Ovary (tissue), 10 donors: ENCODE measurements at regions of chr1 and their contacts with region 1.

Region 1: DNA sequence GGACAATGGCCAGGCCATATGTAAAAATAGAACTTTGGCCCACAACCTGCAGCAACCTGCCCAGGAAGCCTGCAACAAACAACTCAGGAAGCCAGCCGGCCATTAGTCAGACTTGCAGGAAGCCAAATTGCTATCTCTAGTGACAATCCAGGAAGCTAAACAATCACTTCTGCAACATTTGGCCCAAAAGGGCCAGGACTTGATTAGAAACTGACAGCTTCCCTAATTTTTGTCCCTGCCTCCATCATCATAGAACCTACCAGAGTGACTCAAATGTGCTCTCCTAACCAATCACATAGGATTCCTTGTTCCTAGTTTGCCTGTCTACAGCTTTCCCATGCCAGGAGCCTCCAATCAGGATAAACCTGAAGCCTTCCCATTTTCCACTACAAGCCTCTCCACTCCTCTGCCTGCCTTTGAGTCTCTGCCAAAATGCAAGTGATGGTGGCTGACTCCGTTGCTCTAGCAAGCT is 639.3 kb downstream of the PTPRU start:
- DNase-seq: no peak
- H3K4me3 ChIP-seq: no peak overlapping the region
- H3K27ac ChIP-seq: no peak overlapping the region
- H3K4me1 ChIP-seq: no peaks in the 10 kb centered on the region
- H3K27me3 ChIP-seq: no peaks in the 10 kb centered on the region
- CTCF ChIP-seq: no peak
- EP300 ChIP-seq: no peak
- POLR2A ChIP-seq: no peak

Region 2: DNA sequence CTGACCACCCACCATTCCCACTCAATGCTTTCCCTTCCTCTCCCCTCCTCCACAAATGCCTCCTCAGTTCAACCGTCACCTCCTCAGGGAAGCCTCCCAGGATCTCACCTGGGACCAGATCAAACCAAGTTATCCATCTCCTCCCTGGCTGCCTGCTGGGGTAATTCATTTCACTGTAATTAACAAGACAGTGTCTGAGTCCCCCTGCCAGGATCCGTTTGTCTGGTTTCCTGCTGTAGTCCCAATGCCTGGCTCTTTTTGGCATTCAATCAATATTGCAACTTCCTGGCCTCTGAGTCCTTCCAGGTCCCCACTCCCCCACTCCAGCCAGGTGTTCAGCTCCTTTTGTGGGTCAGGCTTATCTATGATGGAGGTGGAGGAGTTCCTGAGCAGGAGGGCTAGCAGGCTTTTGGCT is 48.4 kb after region 1 on chr1:
- intact Hi-C with region 1: loop called in 1 of 4 experiments (anchors 2 kb)
- DNase-seq: no peak
- H3K4me3 ChIP-seq: no peak overlapping the region
- H3K27ac ChIP-seq: no peak overlapping the region
- H3K4me1 ChIP-seq: no peaks in the 10 kb centered on the region
- H3K27me3 ChIP-seq: no peaks in the 10 kb centered on the region
- CTCF ChIP-seq: no peak
- EP300 ChIP-seq: no peak
- POLR2A ChIP-seq: no peak